ENCODE measurements at regions of chr18 and their contacts with region 1.

Region 1: GRCh38 chr18:37796823-37797349 is 231.3 kb upstream of the CELF4 start:
- DNase-seq: no peak
- H3K4me3 ChIP-seq: no peak overlapping the region
- H3K27ac ChIP-seq: no peak overlapping the region
- H3K27me3 ChIP-seq: no peaks in the 10 kb centered on the region
- CTCF ChIP-seq: no peak

Region 2: GRCh38 chr18:37393945-37394609 is 402.8 kb before region 1 on chr18:
- CTCF ChIA-PET with region 1: no interaction called
- POLR2A ChIA-PET with region 1: no interaction called
- DNase-seq: peak; percentile 59
- H3K4me3 ChIP-seq: peak overlapping the region; percentile 56
- H3K27ac ChIP-seq: peak overlapping the region; percentile 31
- H3K27me3 ChIP-seq: peaks cover 18% of the 10 kb centered on the region
- CTCF ChIP-seq: no peak

Region 3: DNA sequence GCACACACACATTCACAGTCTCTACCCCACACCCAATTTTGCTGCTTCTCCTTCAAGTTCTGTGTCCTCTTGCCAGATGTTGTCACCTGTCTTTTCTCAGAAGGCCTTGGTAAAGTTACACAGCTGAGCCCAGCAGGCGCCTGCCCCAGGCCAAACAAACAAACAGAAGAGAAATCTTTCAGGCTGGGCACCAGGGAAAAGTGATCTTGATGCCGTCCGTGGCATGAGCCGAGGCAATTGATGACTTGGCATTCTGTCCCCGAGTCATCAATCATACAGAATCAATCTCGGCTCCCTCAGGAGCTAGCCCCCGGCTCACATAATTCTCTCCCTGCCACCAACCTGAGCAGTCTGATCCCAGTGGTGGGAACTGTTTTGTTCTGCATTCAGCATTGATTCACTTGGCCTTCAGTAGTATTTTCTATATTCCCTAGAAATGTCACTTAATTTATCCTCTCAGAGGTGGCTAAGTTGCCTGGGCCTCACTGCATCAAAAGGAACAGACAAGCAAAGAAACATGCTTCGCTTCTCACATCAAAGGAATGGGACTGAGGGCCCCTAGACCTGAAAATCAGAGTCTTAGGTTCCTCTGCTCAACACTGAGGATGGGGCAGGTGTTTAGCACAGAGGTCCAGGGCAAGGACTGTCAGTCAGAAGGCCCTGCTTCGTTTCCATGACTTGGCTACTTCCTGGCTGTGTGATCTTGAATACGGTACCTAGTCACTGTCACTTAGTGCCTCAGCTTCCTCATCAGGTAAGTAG is 47.5 kb after region 1 on chr18:
- CTCF ChIA-PET with region 1: interaction called, 12 read pairs
- POLR2A ChIA-PET with region 1: no interaction called
- DNase-seq: no peak
- H3K4me3 ChIP-seq: no peak overlapping the region
- H3K27ac ChIP-seq: no peak overlapping the region
- H3K27me3 ChIP-seq: no peaks in the 10 kb centered on the region
- CTCF ChIP-seq: no peak

Region 4: GRCh38 chr18:39647627-39648534 is 1851.0 kb after region 1 on chr18:
- CTCF ChIA-PET with region 1: no interaction called
- POLR2A ChIA-PET with region 1: no interaction called
- DNase-seq: peak; percentile 74
- H3K4me3 ChIP-seq: no peak overlapping the region
- H3K27ac ChIP-seq: no peak overlapping the region
- H3K27me3 ChIP-seq: no peaks in the 10 kb centered on the region
- CTCF ChIP-seq: no peak

Measured in AG04450 (cell line).